ENCODE measurements at regions of chr7 and their contacts with region 1.

Region 1: DNA sequence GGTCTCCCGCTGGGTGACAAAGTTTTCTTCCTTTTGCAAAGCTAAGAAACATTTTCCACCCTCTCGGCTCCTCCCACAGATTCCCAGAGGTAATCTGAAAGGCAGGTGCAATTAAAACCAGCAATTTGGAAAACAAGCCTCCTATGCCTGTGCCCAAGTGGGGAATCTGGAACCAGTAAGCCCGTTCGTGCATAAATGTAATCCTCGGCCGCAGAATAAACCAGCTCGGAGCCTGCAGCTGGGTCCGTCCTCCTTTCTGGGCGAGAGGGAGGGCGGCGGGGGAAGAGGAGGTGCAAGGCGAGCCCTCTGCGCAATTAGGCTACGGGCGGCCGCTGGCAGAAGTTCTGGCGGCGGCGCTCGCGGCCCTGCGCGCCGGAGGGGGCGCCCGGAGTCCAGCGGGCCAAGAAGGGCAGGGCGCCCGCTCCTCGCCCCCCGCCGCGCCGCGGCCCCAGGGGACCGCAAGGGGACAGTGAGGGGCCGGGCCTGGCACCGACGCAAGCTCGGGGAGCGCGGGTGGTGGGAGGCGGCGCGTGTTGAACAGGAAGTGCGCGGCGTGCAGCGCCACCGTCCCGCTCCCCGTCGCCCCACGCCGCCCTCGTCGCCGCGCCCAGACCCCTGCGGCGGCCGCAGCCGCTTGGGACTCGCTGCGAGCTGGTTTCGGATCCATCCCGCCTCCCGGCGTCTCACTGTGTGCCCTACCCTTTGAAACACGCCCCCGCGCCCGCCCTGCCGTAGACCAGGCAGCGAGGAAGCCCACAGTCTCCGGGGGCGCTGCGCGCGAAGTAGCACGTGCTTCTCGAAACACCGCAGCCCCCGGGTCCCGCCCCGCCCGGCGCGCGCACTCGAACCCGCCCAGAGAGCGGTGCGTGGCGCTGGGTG is at the start of gene PRKAG2:
- DNase-seq: peak; percentile 75
- ATAC-seq: peak; percentile 60
- H3K4me3 Mint-ChIP-seq: peak within 1 kb of the TSS; percentile 97
- H3K27ac Mint-ChIP-seq: peak within 1 kb of the TSS; percentile 91
- H3K4me1 Mint-ChIP-seq: peaks cover 15% of the 10 kb centered on the region
- H3K27me3 Mint-ChIP-seq: no peaks in the 10 kb centered on the region
- CTCF ChIP-seq: no peak
- total RNA-seq, gene PRKAG2: 19.7 TPM in 2 replicates

Region 2: GRCh38 chr7:151080522-151081169 is 796.5 kb before region 1 on chr7 and contains the start of gene FASTK:
- CTCF ChIA-PET with region 1: no interaction called
- POLR2A ChIA-PET with region 1: no interaction called
- intact Hi-C with region 1: loop called (anchors 10 kb)
- DNase-seq: peak; percentile 81
- ATAC-seq: peak; percentile 83
- H3K4me3 Mint-ChIP-seq: peak within 1 kb of the TSS; percentile 91
- H3K27ac Mint-ChIP-seq: peak within 1 kb of the TSS; percentile 70
- H3K4me1 Mint-ChIP-seq: peaks cover 49% of the 10 kb centered on the region
- H3K27me3 Mint-ChIP-seq: peaks cover 8% of the 10 kb centered on the region
- CTCF ChIP-seq: no peak
- total RNA-seq, gene FASTK: 97.6 and 103 TPM in 2 replicates

Region 3: DNA sequence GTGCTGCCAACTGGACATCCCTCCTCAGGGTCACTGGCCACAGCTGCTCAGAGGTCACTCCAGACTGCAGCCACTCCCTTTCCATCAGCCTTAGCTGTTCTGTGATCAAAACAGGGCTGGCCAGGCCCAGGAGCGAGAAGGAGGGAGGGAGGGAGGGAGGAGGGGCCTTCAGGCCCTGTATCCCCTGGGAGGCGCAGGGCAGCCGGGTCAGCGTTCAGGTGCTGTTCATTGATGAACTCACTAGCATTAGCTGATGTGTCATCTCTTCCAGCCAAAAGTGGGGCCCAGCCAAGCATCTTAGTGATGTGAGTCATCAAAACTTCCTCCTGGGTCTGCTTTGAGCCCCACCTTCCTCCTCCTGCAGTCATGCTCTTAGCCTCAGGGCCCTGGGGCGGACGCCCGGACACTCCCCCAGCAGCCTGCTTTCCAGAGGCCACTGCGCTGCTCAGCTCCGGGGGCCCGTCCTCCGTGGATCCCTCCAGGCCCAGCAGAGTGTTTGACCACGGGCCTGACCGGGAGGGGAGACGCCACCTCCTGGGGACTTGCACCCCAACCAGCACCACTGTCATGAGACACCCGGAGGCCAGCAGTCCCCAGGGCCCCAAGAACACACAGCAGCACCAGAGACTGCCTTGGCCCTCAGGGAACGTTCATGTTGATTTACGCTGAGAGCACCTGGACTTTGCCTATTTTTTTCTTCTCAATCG is 149.4 kb before region 1 on chr7:
- CTCF ChIA-PET with region 1: no interaction called
- POLR2A ChIA-PET with region 1: no interaction called
- intact Hi-C with region 1: loop called (anchors 5 kb)
- DNase-seq: peak; percentile 44
- ATAC-seq: peak; percentile 83
- H3K4me3 Mint-ChIP-seq: peak overlapping the region; percentile 11
- H3K27ac Mint-ChIP-seq: no peak overlapping the region
- H3K4me1 Mint-ChIP-seq: peaks cover 37% of the 10 kb centered on the region
- H3K27me3 Mint-ChIP-seq: no peaks in the 10 kb centered on the region
- CTCF ChIP-seq: no peak

Region 4: DNA sequence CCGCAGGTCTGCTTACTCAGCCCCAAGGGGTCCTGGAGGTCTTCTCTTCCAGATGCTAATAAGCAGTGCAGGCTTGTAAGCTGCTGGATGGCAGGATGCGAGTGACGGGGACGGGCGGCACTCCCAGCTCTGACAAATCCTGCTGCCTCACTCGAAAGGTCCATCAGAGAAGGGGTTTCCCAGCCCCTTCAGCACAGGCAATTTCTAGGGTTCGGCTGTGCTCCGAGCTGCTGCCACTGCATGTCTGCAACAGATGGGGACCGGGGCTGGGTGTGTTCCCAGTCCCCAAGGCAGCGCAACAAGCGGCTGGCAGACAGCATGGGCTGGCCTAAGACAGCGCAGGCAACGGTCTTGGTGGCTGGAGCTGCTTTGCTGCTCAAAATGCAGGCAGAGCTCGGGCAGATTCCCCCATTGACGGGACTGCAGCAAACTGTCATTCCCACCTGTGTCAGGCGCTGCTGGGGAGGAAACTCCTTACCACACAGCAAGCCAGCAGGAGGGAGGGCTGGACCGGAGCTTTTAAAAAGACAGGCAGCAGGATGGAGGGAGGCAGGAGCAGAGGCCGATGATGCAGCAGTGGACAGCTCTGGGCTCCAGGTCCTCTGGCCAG is 62.6 kb before region 1 on chr7:
- CTCF ChIA-PET with region 1: no interaction called
- POLR2A ChIA-PET with region 1: no interaction called
- intact Hi-C with region 1: no loop called
- DNase-seq: no peak
- ATAC-seq: no peak
- H3K4me3 Mint-ChIP-seq: no peak overlapping the region
- H3K27ac Mint-ChIP-seq: no peak overlapping the region
- H3K4me1 Mint-ChIP-seq: peaks cover 19% of the 10 kb centered on the region
- H3K27me3 Mint-ChIP-seq: no peaks in the 10 kb centered on the region
- CTCF ChIP-seq: no peak

Region 5: DNA sequence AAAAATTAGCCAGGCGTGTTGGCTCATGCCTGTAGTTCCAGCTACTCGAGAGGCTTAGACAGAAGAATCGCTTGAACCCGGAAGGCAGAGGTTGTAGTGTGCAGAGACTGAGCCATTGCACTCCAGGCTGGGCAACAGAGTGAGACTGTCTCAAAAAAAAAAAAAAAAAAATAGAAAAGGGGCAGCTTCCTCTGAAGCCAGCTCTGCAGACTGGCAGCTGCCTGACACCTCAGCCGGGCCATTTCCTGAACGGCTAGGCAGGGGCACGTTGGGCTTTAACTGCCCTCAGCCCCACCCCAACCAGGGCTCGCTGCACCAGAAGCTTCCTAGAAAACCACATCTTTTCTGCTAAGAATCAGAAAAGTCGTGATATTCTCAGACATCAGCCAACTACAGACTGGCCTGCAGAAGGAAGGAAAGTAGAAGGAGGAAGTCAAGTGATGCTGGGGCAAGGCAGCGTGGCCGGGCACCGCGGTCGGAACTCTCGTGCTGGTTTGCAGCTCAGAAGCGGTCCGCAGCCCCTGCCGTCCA is 38.2 kb before region 1 on chr7:
- CTCF ChIA-PET with region 1: no interaction called
- POLR2A ChIA-PET with region 1: interaction called, 24 read pairs
- intact Hi-C with region 1: loop called (anchors 1 kb)
- DNase-seq: peak; percentile 49
- ATAC-seq: peak; percentile 80
- H3K4me3 Mint-ChIP-seq: peak overlapping the region; percentile 81
- H3K27ac Mint-ChIP-seq: peak overlapping the region; percentile 90
- H3K4me1 Mint-ChIP-seq: peaks cover 39% of the 10 kb centered on the region
- H3K27me3 Mint-ChIP-seq: no peaks in the 10 kb centered on the region
- CTCF ChIP-seq: no peak

Region 6: GRCh38 chr7:151936207-151936606 is 59.1 kb after region 1 on chr7:
- CTCF ChIA-PET with region 1: no interaction called
- POLR2A ChIA-PET with region 1: no interaction called
- intact Hi-C with region 1: loop called (anchors 1 kb)
- DNase-seq: no peak
- ATAC-seq: peak; percentile 78
- H3K4me3 Mint-ChIP-seq: peak overlapping the region; percentile 77
- H3K27ac Mint-ChIP-seq: peak overlapping the region; percentile 94
- H3K4me1 Mint-ChIP-seq: peaks cover 45% of the 10 kb centered on the region
- H3K27me3 Mint-ChIP-seq: peaks cover 3% of the 10 kb centered on the region
- CTCF ChIP-seq: no peak

Region 7: GRCh38 chr7:152463709-152464311 is 586.7 kb after region 1 on chr7:
- CTCF ChIA-PET with region 1: no interaction called
- POLR2A ChIA-PET with region 1: no interaction called
- intact Hi-C with region 1: loop called (anchors 2 kb)
- DNase-seq: peak; percentile 100
- ATAC-seq: peak; percentile 91
- H3K4me3 Mint-ChIP-seq: peak overlapping the region; percentile 97
- H3K27ac Mint-ChIP-seq: peak overlapping the region; percentile 53
- H3K4me1 Mint-ChIP-seq: peaks cover 26% of the 10 kb centered on the region
- H3K27me3 Mint-ChIP-seq: no peaks in the 10 kb centered on the region
- CTCF ChIP-seq: no peak

Measured in activated B cell treated with CpG ODN at 0.5 μM for 24 hours (primary cell).